HAP-1 (cell line): ENCODE measurements at regions of chr16 and their contacts with region 1.

Region 1: DNA sequence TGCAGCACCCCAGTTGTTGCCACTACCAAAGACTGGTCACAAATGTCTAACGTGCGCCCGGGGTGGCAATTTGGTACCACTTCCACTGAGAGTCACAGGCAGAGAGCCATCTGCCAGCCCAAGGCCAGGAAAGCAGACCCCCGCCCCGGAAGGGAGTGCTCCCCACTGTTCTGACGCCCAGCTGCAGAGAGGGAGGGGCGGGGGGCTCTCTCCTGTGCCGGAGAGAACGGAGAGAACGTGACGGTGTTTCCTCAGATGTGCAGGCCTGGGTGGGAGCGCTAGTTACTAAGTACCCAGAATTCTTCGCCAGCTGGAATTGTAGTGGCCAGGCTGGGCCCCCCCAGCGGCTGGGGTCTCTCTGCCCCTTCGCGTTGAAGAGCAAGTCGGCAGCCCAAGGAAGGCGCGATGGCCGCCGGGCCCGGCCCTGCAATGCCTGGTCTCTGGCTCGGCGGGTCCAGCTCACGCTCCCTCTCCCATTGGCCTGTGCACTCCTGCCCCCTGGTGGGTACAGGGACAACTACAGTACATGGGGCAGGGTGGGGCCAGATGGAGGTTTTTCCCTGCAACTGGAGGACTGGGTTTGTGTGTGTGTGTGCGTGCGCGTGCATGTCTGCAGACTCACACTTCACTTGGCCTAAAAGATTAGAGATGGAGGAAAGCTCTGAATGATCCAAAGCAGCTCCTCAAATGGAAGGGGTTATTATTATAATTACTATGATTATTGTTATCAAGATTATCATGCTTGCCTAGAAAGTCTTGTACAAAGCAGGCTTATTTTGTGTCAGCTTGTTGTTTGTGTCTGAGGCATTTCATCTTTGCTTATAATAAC is 107.1 kb downstream of the AMFR start:
- DNase-seq: peak; percentile 72 to 89
- H3K4me3 ChIP-seq: no peak overlapping the region
- H3K4me1 ChIP-seq: no peaks in the 10 kb centered on the region
- H3K27me3 ChIP-seq: no peaks in the 10 kb centered on the region

Region 2: DNA sequence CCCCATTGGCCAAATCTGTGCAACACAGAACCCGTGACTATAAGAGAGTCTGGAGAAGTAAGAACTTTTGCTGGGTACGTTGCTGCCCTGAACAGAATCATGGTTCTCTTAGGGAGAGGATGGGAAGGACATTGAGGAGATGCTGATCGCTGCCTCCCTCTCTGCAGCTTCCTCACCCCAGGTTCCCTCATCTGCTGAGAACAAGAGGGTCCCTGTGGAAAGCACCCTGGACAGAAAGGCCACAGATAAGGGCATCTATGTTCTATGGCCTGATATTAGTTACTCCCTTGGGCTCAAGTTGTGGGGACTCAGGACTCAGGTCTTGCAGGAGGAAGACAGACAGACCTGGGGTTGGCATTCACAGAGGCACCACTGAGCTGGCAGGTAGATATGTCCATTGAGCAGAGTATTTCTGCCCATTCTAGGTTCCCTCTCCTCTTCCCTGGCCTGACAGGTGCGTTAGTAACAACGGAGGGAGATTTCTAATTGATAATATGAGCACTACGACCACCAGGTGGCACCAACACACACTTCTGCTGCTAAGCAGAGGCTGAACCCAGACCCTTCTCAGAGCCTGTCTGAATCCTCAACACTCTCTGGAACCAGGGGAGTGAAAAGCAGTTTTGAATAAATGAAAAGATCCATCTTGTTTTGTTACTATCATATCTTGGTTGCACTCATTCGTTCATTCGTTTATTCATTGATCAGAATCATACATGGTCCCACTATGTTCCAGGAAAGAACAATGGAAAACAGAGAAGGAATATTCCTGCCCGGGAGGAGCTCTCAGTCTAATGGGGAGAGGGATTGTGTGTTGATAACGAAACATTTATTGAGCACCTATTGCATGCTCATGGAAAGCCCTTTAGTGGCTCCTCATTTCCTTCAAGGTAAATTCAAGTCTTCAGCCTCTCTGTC is 606.0 kb before region 1 on chr16:
- in situ Hi-C with region 1: loop called (anchors 25 kb)
- DNase-seq: peak; percentile 50 to 79
- H3K4me3 ChIP-seq: no peak overlapping the region
- H3K4me1 ChIP-seq: no peaks in the 10 kb centered on the region
- H3K27me3 ChIP-seq: no peaks in the 10 kb centered on the region

Region 3: GRCh38 chr16:55949518-55949917 is 368.7 kb before region 1 on chr16:
- in situ Hi-C with region 1: loop called (anchors 5 kb)
- DNase-seq: no peak
- H3K4me3 ChIP-seq: no peak overlapping the region
- H3K4me1 ChIP-seq: no peaks in the 10 kb centered on the region
- H3K27me3 ChIP-seq: peaks cover 3% of the 10 kb centered on the region; the same call in 1 of the 2 replicates

Region 4: GRCh38 chr16:56041686-56042085 is 276.5 kb before region 1 on chr16:
- in situ Hi-C with region 1: loop called (anchors 25 kb)
- DNase-seq: peak in 1 of 2 experiments; percentile 60
- H3K4me3 ChIP-seq: no peak overlapping the region
- H3K4me1 ChIP-seq: no peaks in the 10 kb centered on the region
- H3K27me3 ChIP-seq: no peaks in the 10 kb centered on the region